Activated B cell treated with CpG ODN at 0.5 μM for 24 hours (primary cell): ENCODE measurements at regions of chr2 and their contacts with region 1.

Region 1: DNA sequence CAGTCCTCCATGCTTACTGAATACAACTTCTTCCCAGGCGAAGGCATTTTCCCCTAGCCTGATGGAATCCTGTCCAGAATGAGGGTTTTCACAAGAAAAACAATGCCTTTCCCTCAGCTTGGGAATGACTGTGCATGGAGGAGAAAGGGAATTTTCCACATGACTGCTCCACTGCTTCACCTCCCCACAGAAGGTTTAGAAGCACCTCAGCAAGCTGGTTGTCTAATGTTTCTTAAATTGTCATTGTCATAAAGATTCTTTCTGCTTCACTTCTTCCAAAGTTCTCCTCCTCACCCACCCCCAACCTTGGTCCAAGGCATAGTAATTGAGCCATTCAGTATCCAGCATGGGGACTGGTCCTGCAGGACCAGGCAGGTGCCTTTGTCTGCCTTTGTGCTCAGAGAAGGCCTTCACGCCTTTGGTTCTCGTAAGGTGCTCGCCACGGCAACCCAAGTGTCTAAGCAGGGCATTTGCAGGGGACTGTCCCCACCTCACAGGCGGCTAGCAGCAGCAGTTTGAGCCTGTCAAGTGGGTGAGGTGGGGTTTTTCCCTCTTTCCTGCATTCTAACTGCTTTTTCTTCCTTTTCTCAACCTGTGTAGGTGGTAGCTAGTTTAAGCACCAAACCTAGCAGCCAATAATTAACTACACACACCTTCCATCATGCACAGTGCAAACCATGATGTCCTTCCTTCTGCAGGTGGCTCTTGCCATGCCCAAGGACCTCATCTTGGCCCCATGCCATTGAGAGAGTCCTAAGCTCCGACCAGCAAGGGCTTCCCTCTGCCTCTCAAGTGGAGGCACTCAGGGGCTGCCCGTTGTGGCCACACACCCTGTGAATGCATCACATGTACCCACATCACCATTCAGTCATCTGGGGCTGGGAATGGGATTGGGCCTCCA is 65.7 kb upstream of the BCL2L11 start:
- DNase-seq: no peak
- ATAC-seq: peak; percentile 83
- H3K4me3 Mint-ChIP-seq: peak overlapping the region; percentile 16
- H3K27ac Mint-ChIP-seq: peak overlapping the region; percentile 64
- H3K4me1 Mint-ChIP-seq: peaks cover 68% of the 10 kb centered on the region
- H3K27me3 Mint-ChIP-seq: no peaks in the 10 kb centered on the region
- CTCF ChIP-seq: no peak

Region 2: DNA sequence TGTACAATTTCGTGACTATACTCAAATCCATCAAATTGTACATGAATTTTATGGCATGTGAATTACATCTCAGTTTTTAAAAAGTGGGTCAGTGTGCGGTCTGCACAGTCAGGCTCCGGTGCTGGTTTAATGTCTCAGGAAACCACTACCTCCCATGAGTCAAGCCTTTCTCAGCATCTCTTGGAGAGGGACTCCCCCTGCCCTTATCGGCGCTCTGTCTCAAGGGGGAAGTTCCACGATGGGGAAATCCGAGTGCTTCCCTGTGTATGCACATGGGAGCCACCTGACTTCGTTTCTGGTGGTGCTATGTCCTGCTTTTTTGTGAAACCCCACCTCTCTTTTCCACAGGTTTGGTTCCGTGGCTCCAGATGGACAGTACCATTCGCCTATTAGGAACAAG is 250.1 kb before region 1 on chr2:
- CTCF ChIA-PET with region 1: no interaction called
- POLR2A ChIA-PET with region 1: interaction called, 4 read pairs
- intact Hi-C with region 1: loop called (anchors 5 kb)
- DNase-seq: peak; percentile 46
- ATAC-seq: peak; percentile 85
- H3K4me3 Mint-ChIP-seq: peak overlapping the region; percentile 47
- H3K27ac Mint-ChIP-seq: peak overlapping the region; percentile 67
- H3K4me1 Mint-ChIP-seq: peaks cover 31% of the 10 kb centered on the region
- H3K27me3 Mint-ChIP-seq: peaks cover 39% of the 10 kb centered on the region
- CTCF ChIP-seq: no peak

Region 3: DNA sequence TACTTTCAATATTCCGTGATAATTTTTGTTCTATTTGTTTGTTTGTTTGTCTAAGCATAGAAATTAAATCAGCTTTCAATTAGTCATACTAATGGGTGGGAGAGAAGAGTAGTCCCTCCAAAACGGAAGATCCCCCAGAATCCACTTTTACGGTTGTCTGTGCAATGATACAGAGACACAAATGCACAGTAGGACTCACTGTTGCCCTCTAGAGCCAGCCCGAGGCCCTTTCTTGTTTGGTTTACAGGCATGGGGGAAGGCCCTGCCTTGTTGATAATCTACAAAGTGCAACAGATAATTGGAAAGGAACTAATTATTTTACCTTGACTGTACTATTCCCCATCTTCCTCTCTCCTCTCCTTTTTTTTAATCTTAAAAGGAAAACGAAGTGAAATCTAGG is 201.5 kb before region 1 on chr2:
- CTCF ChIA-PET with region 1: no interaction called
- POLR2A ChIA-PET with region 1: no interaction called
- intact Hi-C with region 1: loop called (anchors 5 kb)
- DNase-seq: no peak
- ATAC-seq: peak; percentile 27
- H3K4me3 Mint-ChIP-seq: no peak overlapping the region
- H3K27ac Mint-ChIP-seq: no peak overlapping the region
- H3K4me1 Mint-ChIP-seq: peaks cover 34% of the 10 kb centered on the region
- H3K27me3 Mint-ChIP-seq: no peaks in the 10 kb centered on the region
- CTCF ChIP-seq: no peak

Region 4: GRCh38 chr2:111037128-111037527 is 17.9 kb before region 1 on chr2:
- CTCF ChIA-PET with region 1: interaction called, 3 read pairs
- POLR2A ChIA-PET with region 1: interaction called, 5 read pairs
- intact Hi-C with region 1: loop called (anchors 1 kb)
- DNase-seq: no peak
- ATAC-seq: peak; percentile 79
- H3K4me3 Mint-ChIP-seq: peak overlapping the region; percentile 61
- H3K27ac Mint-ChIP-seq: peak overlapping the region; percentile 64
- H3K4me1 Mint-ChIP-seq: peaks cover 35% of the 10 kb centered on the region
- H3K27me3 Mint-ChIP-seq: no peaks in the 10 kb centered on the region
- CTCF ChIP-seq: no peak

Region 5: GRCh38 chr2:111071600-111072171 is 16.6 kb after region 1 on chr2:
- CTCF ChIA-PET with region 1: interaction called, 5 read pairs
- POLR2A ChIA-PET with region 1: interaction called, 9 read pairs
- intact Hi-C with region 1: loop called (anchors 1 kb)
- DNase-seq: no peak
- ATAC-seq: peak; percentile 85
- H3K4me3 Mint-ChIP-seq: peak overlapping the region; percentile 7
- H3K27ac Mint-ChIP-seq: peak overlapping the region; percentile 63
- H3K4me1 Mint-ChIP-seq: peaks cover 16% of the 10 kb centered on the region
- H3K27me3 Mint-ChIP-seq: no peaks in the 10 kb centered on the region
- CTCF ChIP-seq: no peak

Region 6: DNA sequence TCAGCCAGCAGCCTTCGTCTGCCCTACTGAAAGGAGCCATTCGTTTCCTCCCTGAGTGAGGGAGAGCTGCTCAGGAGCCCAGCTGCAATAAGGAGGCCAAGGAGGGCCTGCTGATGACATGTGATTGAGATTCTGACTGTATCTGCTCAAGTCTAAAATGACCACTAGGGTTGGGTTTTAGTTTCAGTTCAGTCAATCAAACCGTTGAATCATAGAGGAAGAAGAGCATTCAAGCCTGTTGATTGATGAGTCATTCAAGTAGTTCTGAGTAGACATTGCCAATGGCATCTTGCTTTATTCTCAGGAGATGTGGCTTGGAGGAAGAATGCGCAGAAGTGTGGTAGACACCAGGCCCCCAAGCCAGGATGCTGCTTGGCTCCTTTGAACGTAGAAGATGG is 45.7 kb after region 1 on chr2:
- CTCF ChIA-PET with region 1: no interaction called
- POLR2A ChIA-PET with region 1: interaction called, 10 read pairs
- intact Hi-C with region 1: loop called (anchors 5 kb)
- DNase-seq: no peak
- ATAC-seq: peak; percentile 90
- H3K4me3 Mint-ChIP-seq: no peak overlapping the region
- H3K27ac Mint-ChIP-seq: no peak overlapping the region
- H3K4me1 Mint-ChIP-seq: peaks cover 10% of the 10 kb centered on the region
- H3K27me3 Mint-ChIP-seq: no peaks in the 10 kb centered on the region
- CTCF ChIP-seq: no peak

Region 7: GRCh38 chr2:111148925-111149324 is 93.9 kb after region 1 on chr2:
- CTCF ChIA-PET with region 1: no interaction called
- POLR2A ChIA-PET with region 1: no interaction called
- intact Hi-C with region 1: no loop called
- DNase-seq: no peak
- ATAC-seq: no peak
- H3K4me3 Mint-ChIP-seq: no peak overlapping the region
- H3K27ac Mint-ChIP-seq: no peak overlapping the region
- H3K4me1 Mint-ChIP-seq: peaks cover 12% of the 10 kb centered on the region
- H3K27me3 Mint-ChIP-seq: no peaks in the 10 kb centered on the region
- CTCF ChIP-seq: no peak